ENCODE measurements at regions of chr5 and their contacts with region 1.

Region 1: DNA sequence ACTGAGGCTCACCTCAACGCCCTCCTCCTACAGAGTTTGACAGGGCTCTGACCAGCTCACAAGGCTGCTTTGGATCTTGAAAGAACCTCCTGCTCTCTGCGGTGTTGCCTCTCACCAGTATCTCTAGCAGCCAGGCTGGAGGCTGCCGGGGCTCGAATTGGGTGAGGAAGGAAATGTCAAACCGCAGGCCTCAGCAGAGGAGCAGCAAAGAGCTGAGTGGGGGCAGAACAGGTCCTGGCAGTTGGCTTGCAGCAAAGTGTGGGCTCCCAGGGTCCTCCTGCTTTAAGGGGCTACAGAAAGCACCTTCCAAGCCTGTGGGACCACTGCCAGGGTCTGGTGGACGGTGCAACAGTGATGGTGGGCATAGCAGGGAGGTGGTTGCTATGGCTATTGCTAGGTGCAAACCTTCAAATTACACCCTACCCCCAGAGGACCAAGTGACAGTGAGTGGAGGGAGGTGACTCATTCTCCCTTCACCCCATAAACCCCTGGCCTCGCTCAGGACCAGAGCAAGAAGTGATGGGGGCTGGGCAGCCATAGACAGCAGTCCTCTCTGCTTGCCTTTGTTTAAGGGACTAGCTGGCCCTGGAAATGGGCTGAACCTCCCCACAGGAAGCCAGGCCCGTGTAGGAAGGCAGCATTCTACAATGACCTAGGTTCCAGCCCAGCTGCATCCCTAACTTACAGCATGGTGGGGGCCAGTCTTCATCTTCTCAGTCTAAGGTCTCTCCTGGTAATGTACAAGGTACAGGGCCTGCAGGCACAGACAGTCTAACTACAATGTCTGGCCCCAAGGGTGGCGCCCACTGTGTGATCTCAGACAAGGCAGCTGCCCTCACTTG is 18.7 kb downstream of the LCP2 start:
- DNase-seq: peak; percentile 90
- H3K4me3 Mint-ChIP-seq: peak overlapping the region; percentile 45
- H3K27ac Mint-ChIP-seq: peak overlapping the region; percentile 83
- H3K4me1 Mint-ChIP-seq: peaks cover 95% of the 10 kb centered on the region
- H3K27me3 Mint-ChIP-seq: no peaks in the 10 kb centered on the region

Region 2: DNA sequence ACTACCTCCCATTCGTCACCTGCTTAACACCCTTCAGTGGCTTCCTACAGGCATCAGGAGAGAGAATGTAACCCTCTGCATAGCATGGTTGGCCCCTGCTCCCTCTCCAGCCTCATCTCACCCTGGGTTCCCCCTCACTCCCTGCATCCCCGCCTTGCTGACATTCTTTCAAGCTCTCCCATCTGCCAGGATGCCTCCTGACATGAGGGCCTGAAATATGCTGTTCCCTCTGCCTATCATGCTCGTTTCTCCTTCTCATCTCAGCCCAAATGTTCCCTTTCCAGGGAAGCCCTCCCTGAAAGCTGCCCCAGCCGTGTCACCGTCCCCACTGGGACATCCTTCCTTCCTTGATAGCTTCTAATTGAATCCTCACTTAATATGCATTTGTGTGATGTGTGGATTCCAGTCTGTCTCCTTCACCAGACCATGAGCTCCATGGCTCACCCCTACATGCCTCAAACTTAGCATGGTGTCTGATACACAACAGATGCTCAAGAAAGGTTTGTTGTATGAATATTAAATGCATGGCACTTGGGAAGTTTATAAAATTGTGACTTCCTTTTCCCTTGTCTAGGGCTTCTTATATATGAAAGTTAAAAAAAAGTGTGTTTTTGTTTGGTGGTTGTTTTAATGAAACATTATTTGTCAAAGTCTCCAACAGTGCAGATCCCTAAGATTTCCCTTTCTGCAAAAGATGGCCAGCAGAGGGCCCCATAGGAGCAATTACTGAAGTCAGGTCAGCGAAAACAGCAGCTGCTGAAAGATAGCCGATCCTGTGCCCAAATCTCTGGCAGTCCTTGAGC is 53.3 kb before region 1 on chr5:
- CTCF ChIA-PET with region 1: interaction called, 26 read pairs
- intact Hi-C with region 1: loop called (anchors 1 kb)
- DNase-seq: peak; percentile 91
- H3K4me3 Mint-ChIP-seq: no peak overlapping the region
- H3K27ac Mint-ChIP-seq: no peak overlapping the region
- H3K4me1 Mint-ChIP-seq: peaks cover 7% of the 10 kb centered on the region
- H3K27me3 Mint-ChIP-seq: no peaks in the 10 kb centered on the region

Region 3: GRCh38 chr5:170293273-170293672 is 14.4 kb after region 1 on chr5:
- CTCF ChIA-PET with region 1: interaction called, 281 read pairs
- intact Hi-C with region 1: loop called (anchors 1 kb)
- DNase-seq: peak; percentile 66
- H3K4me3 Mint-ChIP-seq: peak overlapping the region; percentile 95
- H3K27ac Mint-ChIP-seq: peak overlapping the region; percentile 98
- H3K4me1 Mint-ChIP-seq: peaks cover 69% of the 10 kb centered on the region
- H3K27me3 Mint-ChIP-seq: no peaks in the 10 kb centered on the region

Region 4: DNA sequence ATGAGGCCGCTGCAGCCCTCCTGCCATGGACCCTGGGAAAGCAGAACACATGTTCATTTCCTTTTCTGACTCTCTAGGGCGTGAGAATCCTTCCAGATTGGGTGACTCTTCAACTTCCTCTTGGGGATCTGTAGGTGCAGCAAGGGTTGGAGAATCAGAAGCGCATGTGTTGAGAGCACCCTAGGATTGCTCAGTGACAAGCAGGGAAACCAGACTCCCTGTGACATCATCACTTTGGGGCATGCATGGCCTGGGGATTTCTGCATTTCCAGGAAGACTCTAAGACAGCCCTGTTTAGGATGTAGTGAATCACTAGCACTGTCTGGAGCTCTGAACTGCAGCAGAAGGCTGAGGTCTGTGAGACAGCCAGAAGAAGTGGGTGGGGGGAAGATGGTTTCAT is 33.8 kb after region 1 on chr5:
- CTCF ChIA-PET with region 1: interaction called, 33 read pairs
- intact Hi-C with region 1: loop called (anchors 1 kb)
- DNase-seq: peak; percentile 90
- H3K4me3 Mint-ChIP-seq: peak overlapping the region; percentile 90
- H3K27ac Mint-ChIP-seq: peak overlapping the region; percentile 94
- H3K4me1 Mint-ChIP-seq: peaks cover 68% of the 10 kb centered on the region
- H3K27me3 Mint-ChIP-seq: no peaks in the 10 kb centered on the region

Measured in activated naive CD4-positive, alpha-beta T cell treated with anti-CD3 and anti-CD28 coated beads for 36 hours (primary cell).